HEK293 (cell line): ENCODE measurements at regions of chr19 and their contacts with region 1.

Region 1: GRCh38 chr19:38647368-38647965 is at the start of gene ACTN4:
- H3K4me3 ChIP-seq: peak within 1 kb of the TSS; percentile 84
- H3K27ac ChIP-seq: peak within 1 kb of the TSS; percentile 96
- H3K4me1 ChIP-seq: peaks cover 37% of the 10 kb centered on the region
- CTCF ChIP-seq: peak; percentile 52; the same call in 1 of the 2 replicates

Region 2: DNA sequence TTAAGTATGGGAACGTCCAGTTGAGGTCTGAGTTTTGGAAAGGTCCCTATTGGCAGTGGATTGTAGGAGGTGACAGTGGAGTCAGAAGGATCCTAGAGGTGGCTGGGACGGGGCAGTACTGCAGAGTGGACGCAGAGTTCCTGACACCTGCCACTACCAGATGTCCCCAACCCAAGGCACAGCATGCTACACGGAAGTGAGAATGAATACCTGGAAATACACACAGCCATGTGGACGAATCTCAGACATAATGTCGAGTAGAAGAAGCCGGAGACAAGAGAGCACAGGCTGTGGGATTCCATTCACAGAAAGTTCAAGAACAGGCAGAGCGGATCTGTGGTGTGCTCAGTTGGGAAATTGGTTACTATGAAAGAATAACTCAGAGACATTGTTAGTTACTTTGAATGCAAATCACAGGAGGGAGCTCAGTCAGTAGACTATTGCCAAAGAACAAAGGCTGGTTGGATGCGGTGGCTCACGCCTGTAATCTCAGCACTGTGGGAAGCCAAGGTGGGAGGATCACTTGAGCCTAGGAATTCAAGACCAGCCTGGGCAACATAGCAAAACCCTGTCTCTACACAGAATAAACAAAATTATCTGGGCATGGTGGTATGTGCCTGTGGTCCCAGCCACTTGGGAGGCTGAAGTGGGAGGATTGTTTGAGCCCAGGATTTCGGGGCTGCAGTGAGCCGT is 176.5 kb before region 1 on chr19:
- CTCF ChIA-PET with region 1: no interaction called
- POLR2A ChIA-PET with region 1: no interaction called
- H3K4me3 ChIP-seq: no peak overlapping the region
- H3K27ac ChIP-seq: no peak overlapping the region
- H3K4me1 ChIP-seq: no peaks in the 10 kb centered on the region
- CTCF ChIP-seq: no peak

Region 3: GRCh38 chr19:38658462-38659306 is 11.2 kb after region 1 on chr19:
- CTCF ChIA-PET with region 1: interaction called, 29 read pairs
- POLR2A ChIA-PET with region 1: interaction called, 122 read pairs
- H3K4me3 ChIP-seq: no peak overlapping the region
- H3K27ac ChIP-seq: peak overlapping the region; percentile 70
- H3K4me1 ChIP-seq: peaks cover 70% of the 10 kb centered on the region
- CTCF ChIP-seq: no peak

Region 4: GRCh38 chr19:38683393-38684080 is 36.1 kb after region 1 on chr19:
- CTCF ChIA-PET with region 1: interaction called, 4 read pairs
- POLR2A ChIA-PET with region 1: interaction called, 63 read pairs
- H3K4me3 ChIP-seq: no peak overlapping the region
- H3K27ac ChIP-seq: peak overlapping the region; percentile 98
- H3K4me1 ChIP-seq: peaks cover 41% of the 10 kb centered on the region
- CTCF ChIP-seq: no peak

Region 5: GRCh38 chr19:38706792-38707511 is 59.5 kb after region 1 on chr19:
- CTCF ChIA-PET with region 1: interaction called, 4 read pairs
- POLR2A ChIA-PET with region 1: interaction called, 10 read pairs
- H3K4me3 ChIP-seq: no peak overlapping the region
- H3K27ac ChIP-seq: peak overlapping the region; percentile 17; the same call in 1 of the 2 replicates
- H3K4me1 ChIP-seq: no peaks in the 10 kb centered on the region
- CTCF ChIP-seq: no peak

Region 6: GRCh38 chr19:38734426-38735256 is 87.2 kb after region 1 on chr19:
- CTCF ChIA-PET with region 1: interaction called, 6 read pairs
- POLR2A ChIA-PET with region 1: interaction called, 11 read pairs
- H3K4me3 ChIP-seq: no peak overlapping the region
- H3K27ac ChIP-seq: peak overlapping the region; percentile 55; the same call in 1 of the 2 replicates
- H3K4me1 ChIP-seq: peaks cover 5% of the 10 kb centered on the region
- CTCF ChIP-seq: no peak